AG04450 (cell line): ENCODE measurements at regions of chr4 and their contacts with region 1.

Region 1: DNA sequence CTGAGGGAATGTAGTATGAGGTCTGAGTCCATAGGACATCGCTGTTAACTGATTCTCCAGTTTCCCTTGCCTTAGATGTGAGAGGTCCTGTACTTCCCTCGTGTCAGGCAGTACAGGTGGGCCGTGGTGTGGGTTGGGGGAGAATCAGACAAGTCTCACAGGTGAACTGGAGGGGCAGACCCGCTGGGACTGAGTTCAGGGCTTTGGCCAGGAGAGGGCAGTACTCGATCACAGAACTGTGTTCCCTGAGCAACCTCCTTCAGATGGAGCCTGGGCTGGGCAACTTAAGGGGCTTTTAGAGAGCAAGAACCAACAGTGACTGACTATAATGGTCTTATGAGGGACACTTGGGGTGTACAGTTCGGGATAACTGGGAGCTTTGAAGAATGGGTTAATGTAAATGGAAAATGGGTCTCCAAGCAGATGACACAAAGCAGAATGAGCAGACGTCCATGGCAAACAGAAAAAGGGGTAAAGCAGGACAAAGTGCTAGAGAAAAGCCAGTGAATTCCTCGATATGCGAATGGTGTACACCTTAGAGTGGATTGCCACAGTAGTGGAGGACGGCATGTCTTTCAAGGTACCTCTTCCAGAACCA is 83.6 kb downstream of the CCNG2 start:
- DNase-seq: no peak
- H3K4me3 ChIP-seq: no peak overlapping the region
- H3K27ac ChIP-seq: no peak overlapping the region
- H3K27me3 ChIP-seq: peaks cover 9% of the 10 kb centered on the region
- CTCF ChIP-seq: peak; percentile 74

Region 2: DNA sequence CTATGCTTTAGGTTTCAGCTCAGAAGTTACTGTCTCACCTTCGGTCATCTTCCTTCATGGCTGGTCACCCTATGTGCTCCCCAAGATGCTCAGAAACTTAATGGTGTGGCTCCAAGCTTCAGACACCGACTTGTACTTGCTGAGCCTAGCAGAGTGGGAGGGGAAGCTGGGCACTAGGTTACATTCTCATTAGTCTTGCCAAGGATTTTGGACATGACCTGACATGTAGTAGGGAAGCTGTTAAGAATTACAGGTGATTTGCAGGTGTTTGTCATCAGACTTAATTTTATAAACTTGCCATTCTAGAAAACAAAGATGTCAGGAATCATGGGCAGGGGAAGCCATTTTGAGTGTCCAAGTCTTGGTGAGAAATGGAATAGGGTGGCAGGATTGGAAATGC is 11.1 kb before region 1 on chr4:
- CTCF ChIA-PET with region 1: interaction called, 10 read pairs
- POLR2A ChIA-PET with region 1: no interaction called
- DNase-seq: no peak
- H3K4me3 ChIP-seq: no peak overlapping the region
- H3K27ac ChIP-seq: no peak overlapping the region
- H3K27me3 ChIP-seq: peaks cover 5% of the 10 kb centered on the region
- CTCF ChIP-seq: no peak

Region 3: GRCh38 chr4:77284036-77284435 is 43.5 kb after region 1 on chr4:
- CTCF ChIA-PET with region 1: no interaction called
- POLR2A ChIA-PET with region 1: no interaction called
- DNase-seq: no peak
- H3K4me3 ChIP-seq: no peak overlapping the region
- H3K27ac ChIP-seq: no peak overlapping the region
- H3K27me3 ChIP-seq: peaks cover 4% of the 10 kb centered on the region
- CTCF ChIP-seq: no peak

Region 4: DNA sequence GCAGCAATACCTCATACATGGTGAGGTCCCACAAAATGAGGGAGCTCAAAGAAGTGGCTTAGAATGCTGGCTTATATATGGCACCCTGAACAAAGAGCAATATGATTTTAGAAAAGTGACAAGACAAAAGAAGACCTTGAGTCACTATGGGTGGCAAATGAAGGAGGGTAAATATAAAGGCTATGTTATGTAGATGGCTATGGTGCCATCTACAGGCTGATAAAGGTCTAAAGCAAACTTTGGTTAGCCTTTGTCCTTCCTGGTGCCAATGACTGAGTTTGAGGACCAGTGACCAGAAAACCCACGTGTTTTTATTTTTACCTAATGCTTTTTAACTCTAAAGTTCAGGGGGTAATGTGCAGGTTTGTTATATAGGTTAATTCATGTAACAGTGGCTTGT is 68.3 kb after region 1 on chr4:
- CTCF ChIA-PET with region 1: interaction called, 13 read pairs
- POLR2A ChIA-PET with region 1: no interaction called
- DNase-seq: peak; percentile 1
- H3K4me3 ChIP-seq: no peak overlapping the region
- H3K27ac ChIP-seq: no peak overlapping the region
- H3K27me3 ChIP-seq: no peaks in the 10 kb centered on the region
- CTCF ChIP-seq: peak; percentile 44

Region 5: DNA sequence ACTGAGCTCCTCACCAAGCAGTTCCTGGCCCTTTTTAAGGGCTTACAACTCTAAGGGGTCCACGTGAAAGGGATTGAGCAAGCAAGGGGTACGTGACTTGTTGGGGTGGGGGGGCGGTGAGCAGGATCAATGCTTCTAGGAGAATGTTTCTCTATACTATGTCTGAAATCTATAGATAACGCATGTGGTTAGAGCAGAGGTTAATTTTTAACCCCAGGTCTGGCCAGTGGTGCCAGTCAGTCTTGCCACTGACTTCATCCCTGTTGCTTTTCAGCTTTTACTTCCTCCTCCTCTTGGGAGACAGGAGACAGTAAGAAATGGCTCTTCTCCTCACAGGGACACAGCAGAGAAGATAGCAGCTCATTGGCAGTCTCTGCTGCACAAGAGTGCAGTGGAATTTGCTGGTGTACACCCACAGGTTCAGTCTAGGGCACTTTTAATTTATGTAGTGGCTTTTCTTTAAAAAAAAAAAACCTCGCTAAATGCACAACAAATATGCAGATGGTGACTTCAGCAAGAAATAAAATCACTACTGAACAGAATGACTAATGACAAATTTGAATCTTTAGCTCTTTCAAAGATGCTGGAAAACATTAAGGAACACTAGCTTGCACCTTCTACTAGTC is 106.9 kb after region 1 on chr4:
- CTCF ChIA-PET with region 1: interaction called, 10 read pairs
- POLR2A ChIA-PET with region 1: no interaction called
- DNase-seq: no peak
- H3K4me3 ChIP-seq: no peak overlapping the region
- H3K27ac ChIP-seq: no peak overlapping the region
- H3K27me3 ChIP-seq: peaks cover 5% of the 10 kb centered on the region
- CTCF ChIP-seq: no peak

Region 6: DNA sequence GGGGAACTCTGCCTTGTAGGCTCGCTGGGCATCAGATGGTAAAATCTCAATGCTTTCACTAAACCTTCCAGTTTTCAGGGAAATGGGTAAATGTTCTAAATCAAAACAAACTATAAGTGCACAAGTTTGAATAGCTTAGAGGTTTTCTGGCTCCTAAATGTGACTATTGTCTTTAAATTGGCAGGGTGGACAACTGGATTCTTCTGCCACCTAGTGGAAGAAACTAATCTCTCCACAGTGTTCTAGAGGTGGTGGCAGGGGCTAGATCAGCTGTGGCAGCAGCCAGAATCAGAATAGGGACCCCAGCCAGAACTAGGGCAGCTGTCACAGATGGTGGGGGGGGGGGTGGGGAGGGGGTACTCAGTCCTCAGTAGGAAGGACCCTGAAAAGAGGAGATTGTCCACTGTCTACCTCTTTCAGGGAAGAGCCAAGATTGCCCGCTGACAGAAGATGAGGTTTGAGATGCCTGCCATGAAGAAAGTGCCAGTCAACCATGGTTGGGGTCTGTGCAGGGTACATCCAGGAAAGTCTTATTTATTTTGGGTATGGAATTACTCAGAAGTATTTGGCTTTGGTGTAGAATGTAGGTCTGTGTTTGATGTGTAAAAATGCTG is 117.9 kb after region 1 on chr4:
- CTCF ChIA-PET with region 1: interaction called, 53 read pairs
- POLR2A ChIA-PET with region 1: no interaction called
- DNase-seq: no peak
- H3K4me3 ChIP-seq: no peak overlapping the region
- H3K27ac ChIP-seq: no peak overlapping the region
- H3K27me3 ChIP-seq: peaks cover 8% of the 10 kb centered on the region
- CTCF ChIP-seq: peak; percentile 72